ENCODE measurements at regions of chr5 and their contacts with region 1.

Region 1: GRCh38 chr5:150560401-150561193 is 52.7 kb downstream of the NDST1 start:
- DNase-seq: peak; percentile 97
- H3K4me3 Mint-ChIP-seq: peak overlapping the region; percentile 17
- H3K27ac Mint-ChIP-seq: peak overlapping the region; percentile 24
- H3K4me1 Mint-ChIP-seq: peaks cover 14% of the 10 kb centered on the region
- H3K27me3 Mint-ChIP-seq: no peaks in the 10 kb centered on the region
- CTCF ChIP-seq: peak; percentile 94

Region 2: DNA sequence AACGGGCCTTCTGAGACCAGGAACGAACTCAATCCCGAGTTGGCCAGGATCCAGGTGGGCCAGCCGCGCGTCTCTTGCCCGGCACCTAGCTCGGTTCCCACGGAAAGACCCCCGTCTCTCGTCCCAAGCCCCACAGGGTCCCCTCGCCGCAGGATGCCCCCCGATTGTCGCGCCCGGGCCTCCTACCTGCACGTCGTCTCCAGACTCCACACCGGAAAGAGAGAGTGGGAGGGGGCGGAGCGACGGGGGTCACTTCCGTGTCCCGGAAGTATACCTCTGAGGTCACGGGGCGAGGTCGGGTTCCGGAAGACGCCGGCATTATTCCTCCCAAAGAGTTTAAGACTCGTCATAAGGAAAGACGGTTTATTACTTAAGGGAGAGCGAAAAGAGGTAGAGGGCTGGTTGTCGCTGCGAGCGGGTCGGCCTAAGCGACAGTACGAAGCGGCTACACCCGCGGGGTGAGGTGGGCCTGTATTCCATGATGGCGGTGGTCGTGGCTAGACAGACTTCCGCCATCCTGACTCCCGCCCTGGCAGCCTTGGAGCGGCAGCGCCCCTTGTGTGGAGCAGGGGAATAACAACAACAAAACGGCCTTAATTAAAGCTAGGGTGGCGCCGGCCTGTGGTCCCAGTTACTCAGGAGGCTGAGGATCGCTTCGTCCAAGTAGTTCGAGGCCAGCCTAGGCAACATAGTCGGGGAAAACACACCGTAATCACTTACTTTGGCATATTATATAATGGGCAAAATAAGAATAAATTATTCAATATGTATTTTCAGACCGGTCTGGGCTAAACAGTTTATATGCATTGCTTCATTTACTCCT is 110.9 kb before region 1 on chr5 and contains the start of gene RPS14:
- CTCF ChIA-PET with region 1: interaction called, 103 read pairs
- POLR2A ChIA-PET with region 1: interaction called, 13 read pairs
- intact Hi-C with region 1: no loop called
- DNase-seq: peak; percentile 98
- H3K4me3 Mint-ChIP-seq: peak within 1 kb of the TSS; percentile 85
- H3K27ac Mint-ChIP-seq: peak within 1 kb of the TSS; percentile 100
- H3K4me1 Mint-ChIP-seq: peaks cover 22% of the 10 kb centered on the region
- H3K27me3 Mint-ChIP-seq: no peaks in the 10 kb centered on the region
- CTCF ChIP-seq: peak; percentile 92
- total RNA-seq, gene RPS14: 5,481 and 5,921 TPM in 2 replicates

Region 3: GRCh38 chr5:150544611-150545219 is 15.9 kb before region 1 on chr5:
- CTCF ChIA-PET with region 1: interaction called, 103 read pairs
- POLR2A ChIA-PET with region 1: interaction called, 12 read pairs
- intact Hi-C with region 1: no loop called
- DNase-seq: peak; percentile 91
- H3K4me3 Mint-ChIP-seq: no peak overlapping the region
- H3K27ac Mint-ChIP-seq: no peak overlapping the region
- H3K4me1 Mint-ChIP-seq: peaks cover 26% of the 10 kb centered on the region
- H3K27me3 Mint-ChIP-seq: no peaks in the 10 kb centered on the region
- CTCF ChIP-seq: peak; percentile 99

Region 4: DNA sequence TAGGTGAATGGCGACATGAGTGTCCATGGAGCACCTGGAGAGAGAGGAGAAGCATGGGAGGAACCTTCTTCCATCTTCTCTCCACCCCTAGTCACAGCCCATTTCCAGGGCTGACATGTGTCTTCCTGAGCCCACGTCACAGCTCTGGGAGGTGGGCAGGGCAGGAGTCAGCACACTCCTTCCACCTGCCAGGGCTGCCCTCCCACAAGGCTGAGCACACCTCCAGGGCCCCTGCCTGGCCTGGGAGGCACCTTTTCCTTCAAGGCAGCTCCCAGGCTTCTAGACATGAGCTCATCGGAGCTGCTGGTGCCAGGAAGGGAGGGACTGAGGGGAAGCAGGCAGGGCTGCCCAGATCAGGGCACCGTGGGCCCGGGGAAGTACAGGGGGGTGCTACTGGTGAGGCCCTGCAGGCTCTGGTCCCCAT is 66.3 kb after region 1 on chr5:
- CTCF ChIA-PET with region 1: no interaction called
- POLR2A ChIA-PET with region 1: no interaction called
- intact Hi-C with region 1: no loop called
- DNase-seq: peak; percentile 62
- H3K4me3 Mint-ChIP-seq: no peak overlapping the region
- H3K27ac Mint-ChIP-seq: no peak overlapping the region
- H3K4me1 Mint-ChIP-seq: peaks cover 15% of the 10 kb centered on the region
- H3K27me3 Mint-ChIP-seq: no peaks in the 10 kb centered on the region
- CTCF ChIP-seq: no peak

Region 5: GRCh38 chr5:150647621-150648251 is 87.1 kb after region 1 on chr5:
- CTCF ChIA-PET with region 1: interaction called, 429 read pairs
- POLR2A ChIA-PET with region 1: interaction called, 7 read pairs
- intact Hi-C with region 1: no loop called
- DNase-seq: no peak
- H3K4me3 Mint-ChIP-seq: no peak overlapping the region
- H3K27ac Mint-ChIP-seq: no peak overlapping the region
- H3K4me1 Mint-ChIP-seq: peaks cover 49% of the 10 kb centered on the region
- H3K27me3 Mint-ChIP-seq: no peaks in the 10 kb centered on the region
- CTCF ChIP-seq: no peak

Region 6: DNA sequence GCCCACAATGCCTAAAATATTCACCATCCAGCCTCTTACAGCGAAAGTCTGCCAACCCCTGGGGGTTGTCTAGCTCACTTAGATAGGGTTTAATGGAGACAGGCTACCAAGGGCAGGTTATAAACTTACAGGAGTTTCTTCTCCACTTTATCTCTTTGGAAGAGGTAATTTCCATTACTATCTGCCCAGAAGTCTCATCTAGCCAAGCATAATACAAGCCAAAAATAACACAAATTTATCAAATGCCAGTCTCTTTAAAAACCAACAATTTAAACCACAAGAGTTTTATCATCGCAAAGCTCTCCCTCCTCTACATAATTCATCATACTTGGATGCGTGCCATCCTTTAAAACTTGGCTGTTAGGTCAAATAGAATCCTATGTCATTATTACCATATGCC is 134.0 kb after region 1 on chr5:
- CTCF ChIA-PET with region 1: interaction called, 109 read pairs
- POLR2A ChIA-PET with region 1: interaction called, 23 read pairs
- intact Hi-C with region 1: no loop called
- DNase-seq: peak; percentile 38
- H3K4me3 Mint-ChIP-seq: no peak overlapping the region
- H3K27ac Mint-ChIP-seq: no peak overlapping the region
- H3K4me1 Mint-ChIP-seq: no peaks in the 10 kb centered on the region
- H3K27me3 Mint-ChIP-seq: no peaks in the 10 kb centered on the region
- CTCF ChIP-seq: no peak

Region 7: DNA sequence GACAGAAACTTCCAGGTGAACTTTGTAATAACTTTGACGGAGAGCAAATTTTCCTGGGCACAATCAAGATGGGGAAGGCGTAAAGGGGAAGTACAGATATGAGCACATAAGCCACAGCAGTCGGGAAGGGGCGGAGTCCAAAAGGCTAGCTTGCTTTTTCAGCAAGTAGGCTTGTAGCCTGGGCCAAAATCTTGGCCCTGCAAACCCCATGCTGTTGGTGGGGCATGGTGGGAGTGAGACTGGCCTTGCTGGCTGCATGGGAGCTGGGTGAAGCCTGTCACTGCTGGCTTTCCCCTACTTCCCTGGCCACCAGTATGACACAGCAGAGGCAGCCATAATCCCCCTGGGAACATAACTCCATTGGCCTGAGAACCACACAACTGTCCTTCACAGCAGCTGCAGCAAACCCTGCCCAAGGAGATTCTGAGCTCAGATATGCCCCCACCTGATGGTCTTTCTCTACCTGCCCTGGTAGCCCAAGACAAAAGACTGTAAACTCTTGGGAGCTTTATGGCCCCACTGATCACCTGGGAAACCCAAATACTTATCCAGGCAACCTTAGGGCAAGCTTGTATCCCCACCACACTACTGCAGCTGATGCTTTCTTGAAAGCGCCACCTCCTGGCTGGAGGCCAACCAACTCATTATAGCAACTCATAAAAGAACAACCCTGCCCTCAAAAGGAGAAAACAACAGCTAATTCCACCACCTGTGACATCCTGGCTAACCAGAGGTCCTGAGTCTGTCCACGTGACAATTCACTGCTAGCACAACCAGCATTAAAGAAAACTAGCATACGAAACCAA is 174.2 kb after region 1 on chr5:
- CTCF ChIA-PET with region 1: interaction called, 13 read pairs
- POLR2A ChIA-PET with region 1: no interaction called
- intact Hi-C with region 1: no loop called
- DNase-seq: peak; percentile 22
- H3K4me3 Mint-ChIP-seq: no peak overlapping the region
- H3K27ac Mint-ChIP-seq: no peak overlapping the region
- H3K4me1 Mint-ChIP-seq: peaks cover 22% of the 10 kb centered on the region
- H3K27me3 Mint-ChIP-seq: no peaks in the 10 kb centered on the region
- CTCF ChIP-seq: no peak

Region 8: DNA sequence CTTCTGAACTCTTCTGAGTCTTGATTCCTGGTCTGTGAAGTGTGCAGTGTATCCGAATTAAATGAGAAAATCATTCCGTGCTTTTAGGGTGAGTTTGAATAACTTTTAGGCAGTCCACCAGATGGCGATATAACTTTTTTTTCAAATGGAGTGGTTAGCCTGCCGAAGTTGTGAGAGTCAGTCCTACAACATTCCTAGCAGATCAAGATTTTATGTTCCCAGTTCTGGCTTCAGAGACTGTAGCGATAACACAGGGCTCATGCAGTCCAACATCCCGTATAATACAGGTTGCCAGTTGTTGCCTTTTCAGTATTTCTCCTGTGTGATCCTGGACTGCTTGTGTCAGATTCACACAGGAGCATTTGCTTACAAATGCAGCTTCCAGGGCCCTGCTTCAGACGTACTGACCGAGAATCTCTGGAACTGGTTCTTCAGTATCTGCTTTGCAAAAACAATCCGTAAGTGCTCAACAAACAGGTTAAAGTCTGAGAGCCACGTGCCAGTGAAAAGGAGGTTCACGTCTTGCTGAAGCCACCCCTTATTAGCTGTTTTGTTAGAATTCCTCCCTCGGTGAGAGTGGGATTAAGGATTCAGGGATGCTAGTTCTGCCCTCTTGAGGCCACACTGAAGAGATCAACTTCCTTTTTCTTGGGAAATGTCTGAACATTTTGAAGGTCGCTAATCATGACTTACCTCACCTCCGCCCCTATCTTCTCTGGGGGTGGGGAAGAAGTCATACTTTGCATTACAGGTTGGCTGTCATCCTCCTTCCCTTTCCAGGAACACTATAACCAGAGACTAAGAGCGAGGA is 240.7 kb after region 1 on chr5:
- CTCF ChIA-PET with region 1: interaction called, 17 read pairs
- POLR2A ChIA-PET with region 1: interaction called, 3 read pairs
- intact Hi-C with region 1: no loop called
- DNase-seq: peak; percentile 87
- H3K4me3 Mint-ChIP-seq: peak overlapping the region; percentile 64
- H3K27ac Mint-ChIP-seq: peak overlapping the region; percentile 36
- H3K4me1 Mint-ChIP-seq: peaks cover 14% of the 10 kb centered on the region
- H3K27me3 Mint-ChIP-seq: no peaks in the 10 kb centered on the region
- CTCF ChIP-seq: peak; percentile 68

Region 9: DNA sequence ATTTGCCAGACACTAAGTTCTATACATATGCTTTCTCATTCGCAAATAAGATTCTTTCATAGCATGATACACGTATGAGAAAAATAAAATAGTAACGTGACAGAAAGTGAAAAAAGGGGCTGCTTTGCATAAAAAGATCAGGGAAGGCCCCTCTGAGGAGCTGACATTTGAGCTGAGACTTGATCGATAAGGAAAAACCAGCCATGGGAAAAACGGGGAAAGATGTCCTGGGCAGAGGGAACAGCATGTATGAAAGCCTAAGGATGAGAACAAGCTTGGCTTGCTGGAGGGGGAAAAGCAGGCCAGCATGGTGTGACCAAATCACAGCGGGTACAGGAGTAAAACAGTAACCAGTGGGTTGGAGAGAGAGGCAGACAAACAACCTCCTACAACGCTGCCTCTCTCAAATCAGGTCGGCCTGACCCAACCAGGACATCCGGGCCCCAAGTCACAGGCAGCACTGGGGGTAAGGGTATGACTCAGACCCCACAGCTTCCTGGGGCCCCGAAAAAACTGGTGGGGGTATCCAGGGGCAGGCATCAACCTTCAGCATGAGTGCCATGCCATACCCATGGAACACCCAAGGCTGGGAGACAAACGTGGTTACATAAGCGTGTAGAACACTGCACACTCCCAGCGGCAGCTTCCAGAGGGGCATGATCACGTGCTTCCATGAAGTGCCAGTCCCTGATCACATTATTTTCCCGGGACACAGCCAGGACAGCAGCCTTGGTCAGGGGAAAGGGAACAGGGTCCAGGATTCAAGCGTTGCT is 518.1 kb after region 1 on chr5:
- CTCF ChIA-PET with region 1: no interaction called
- POLR2A ChIA-PET with region 1: no interaction called
- intact Hi-C with region 1: no loop called
- DNase-seq: no peak
- H3K4me3 Mint-ChIP-seq: peak overlapping the region; percentile 74
- H3K27ac Mint-ChIP-seq: peak overlapping the region; percentile 29
- H3K4me1 Mint-ChIP-seq: peaks cover 77% of the 10 kb centered on the region
- H3K27me3 Mint-ChIP-seq: no peaks in the 10 kb centered on the region
- CTCF ChIP-seq: no peak